Activated CD4-positive, alpha-beta T cell treated with anti-CD3 and anti-CD28 coated beads for 36 hours (primary cell): ENCODE measurements at regions of chr1 and their contacts with region 1.

Region 1: GRCh38 chr1:39799770-39800470 is 11.3 kb upstream of the BMP8B start:
- DNase-seq: peak; percentile 80
- ATAC-seq: peak; percentile 64
- H3K4me3 Mint-ChIP-seq: peak overlapping the region; percentile 32
- H3K27ac Mint-ChIP-seq: peak overlapping the region; percentile 77
- H3K4me1 Mint-ChIP-seq: peaks cover 15% of the 10 kb centered on the region
- H3K27me3 Mint-ChIP-seq: no peaks in the 10 kb centered on the region

Region 2: DNA sequence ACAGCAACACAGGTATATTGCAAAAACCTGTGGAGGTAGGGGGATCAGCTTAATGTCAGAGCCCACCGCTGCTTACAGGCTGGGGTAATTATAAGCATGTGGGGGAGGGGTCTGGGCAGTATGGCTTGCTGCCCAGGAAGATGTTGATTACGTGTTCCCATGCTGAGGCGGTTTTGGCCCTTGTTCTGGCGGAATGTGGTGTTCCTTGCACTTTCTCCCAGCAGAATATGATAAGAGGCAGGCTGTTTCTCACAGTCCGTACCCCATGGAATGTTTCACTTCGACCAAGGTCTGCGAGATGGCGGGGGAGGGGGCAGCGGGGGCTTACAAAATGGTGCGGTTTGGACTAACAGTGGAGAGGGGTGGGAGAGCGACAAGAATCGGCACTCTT is 98.9 kb before region 1 on chr1:
- CTCF ChIA-PET with region 1: no interaction called
- POLR2A ChIA-PET with region 1: no interaction called
- intact Hi-C with region 1: loop called in 1 of 2 experiments (anchors 1 kb)
- DNase-seq: no peak
- ATAC-seq: no peak
- H3K4me3 Mint-ChIP-seq: no peak overlapping the region
- H3K27ac Mint-ChIP-seq: no peak overlapping the region
- H3K4me1 Mint-ChIP-seq: no peaks in the 10 kb centered on the region
- H3K27me3 Mint-ChIP-seq: peaks cover 11% of the 10 kb centered on the region

Region 3: DNA sequence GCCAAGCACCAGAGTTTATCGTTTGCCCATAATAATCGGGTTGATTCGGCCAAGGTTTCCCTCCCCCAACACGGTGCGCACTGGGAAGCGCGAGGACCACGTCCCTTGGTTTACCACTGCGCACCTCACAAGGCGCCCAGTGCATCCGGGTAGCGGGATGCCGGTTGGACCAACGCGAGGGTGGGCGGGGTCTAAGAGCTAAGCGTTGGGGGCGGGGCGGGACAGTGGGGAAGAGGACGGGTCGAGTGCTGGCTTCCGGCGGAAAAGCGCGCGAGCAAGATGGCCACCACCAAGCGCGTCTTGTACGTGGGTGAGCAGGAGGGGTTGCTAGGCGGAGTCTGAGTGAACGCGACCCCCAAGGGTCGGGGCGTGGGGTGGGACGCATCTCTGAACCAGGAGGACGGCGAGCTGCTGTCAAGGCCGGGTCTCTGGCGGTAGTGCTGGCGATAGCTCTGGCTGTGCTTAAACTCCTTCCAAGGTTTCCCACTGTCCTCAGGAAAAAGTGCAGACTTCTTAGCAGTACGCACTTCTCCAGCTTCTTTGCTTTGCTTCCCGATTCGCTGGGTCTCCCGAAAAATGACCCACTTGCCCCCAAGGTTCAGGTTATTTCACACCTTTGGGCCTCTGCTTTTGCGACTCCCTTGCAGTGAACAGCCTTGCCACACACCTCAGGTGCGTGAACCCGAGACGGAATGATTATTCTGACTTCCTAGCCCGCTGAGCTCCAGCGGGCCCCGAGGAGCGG is 61.1 kb before region 1 on chr1 and contains the start of gene PPIE:
- CTCF ChIA-PET with region 1: interaction called, 10 read pairs
- POLR2A ChIA-PET with region 1: no interaction called
- intact Hi-C with region 1: loop called in 1 of 2 experiments (anchors 1 kb)
- DNase-seq: peak; percentile 99
- ATAC-seq: peak; percentile 98
- H3K4me3 Mint-ChIP-seq: peak within 1 kb of the TSS; percentile 96
- H3K27ac Mint-ChIP-seq: peak within 1 kb of the TSS; percentile 94
- H3K4me1 Mint-ChIP-seq: peaks cover 36% of the 10 kb centered on the region
- H3K27me3 Mint-ChIP-seq: peaks cover 7% of the 10 kb centered on the region
- total RNA-seq, gene PPIE: 55.3 to 70.4 TPM

Region 4: GRCh38 chr1:39788758-39789570 is 11.0 kb before region 1 on chr1 and contains the start of gene BMP8B:
- CTCF ChIA-PET with region 1: interaction called, 6 read pairs
- POLR2A ChIA-PET with region 1: no interaction called
- intact Hi-C with region 1: loop called in 1 of 2 experiments (anchors 1 kb)
- DNase-seq: peak; percentile 59
- ATAC-seq: peak; percentile 80
- H3K4me3 Mint-ChIP-seq: peak within 1 kb of the TSS; percentile 66
- H3K27ac Mint-ChIP-seq: no peak within 1 kb of the TSS
- H3K4me1 Mint-ChIP-seq: peaks cover 7% of the 10 kb centered on the region
- H3K27me3 Mint-ChIP-seq: peaks cover 29% of the 10 kb centered on the region
- total RNA-seq, gene BMP8B: 0.21 to 0.28 TPM

Region 5: DNA sequence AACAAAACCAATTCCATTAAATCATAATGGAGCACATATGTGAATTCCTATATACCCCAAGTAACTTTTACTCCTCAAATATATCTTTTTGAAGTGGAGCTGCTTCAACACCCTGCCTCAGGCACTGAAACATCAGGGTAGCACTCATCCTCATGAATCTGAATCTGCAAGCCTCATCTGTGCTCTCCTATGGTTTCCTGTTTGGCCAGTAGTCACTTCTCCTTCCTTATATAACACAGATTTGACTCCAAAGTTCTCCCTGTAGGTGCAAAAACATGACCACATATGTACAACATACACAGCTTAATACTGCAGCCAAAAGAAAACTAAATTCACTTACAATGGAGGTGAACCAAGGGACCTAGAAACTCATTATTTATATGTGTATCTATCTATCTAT is 76.2 kb after region 1 on chr1:
- CTCF ChIA-PET with region 1: no interaction called
- POLR2A ChIA-PET with region 1: no interaction called
- intact Hi-C with region 1: no loop called
- DNase-seq: no peak
- ATAC-seq: no peak
- H3K4me3 Mint-ChIP-seq: no peak overlapping the region
- H3K27ac Mint-ChIP-seq: no peak overlapping the region
- H3K4me1 Mint-ChIP-seq: peaks cover 40% of the 10 kb centered on the region
- H3K27me3 Mint-ChIP-seq: no peaks in the 10 kb centered on the region